Endothelial cell of umbilical vein (primary cell): ENCODE measurements at regions of chr21 and their contacts with region 1.

Region 1: DNA sequence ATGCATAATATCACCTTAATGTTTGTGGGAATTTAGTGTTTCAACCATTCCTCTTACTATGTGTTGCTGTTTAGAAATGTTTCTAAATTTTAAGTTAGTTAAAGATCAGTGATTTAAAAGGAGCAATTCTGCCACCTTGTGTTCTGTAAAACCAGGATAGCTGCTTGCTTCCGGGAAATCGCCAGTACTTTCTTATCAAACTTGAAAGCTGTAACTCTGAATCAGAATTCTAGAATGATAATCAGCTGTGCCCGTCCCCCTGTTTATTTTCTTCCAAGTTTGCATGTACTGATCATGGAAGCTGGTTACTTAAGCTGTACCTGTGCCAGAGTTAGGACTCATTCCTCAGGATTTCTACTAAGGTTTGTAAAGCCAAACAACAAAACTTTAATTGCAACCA is 656.4 kb downstream of the LTN1 start:
- DNase-seq: peak; percentile 78
- H3K4me3 ChIP-seq: no peak overlapping the region
- H3K27ac ChIP-seq: no peak overlapping the region
- H3K4me1 ChIP-seq: peaks cover 20% of the 10 kb centered on the region
- H3K27me3 ChIP-seq: no peaks in the 10 kb centered on the region
- CTCF ChIP-seq: peak; percentile 16 to 25
- POLR2A ChIP-seq: no peak

Region 2: DNA sequence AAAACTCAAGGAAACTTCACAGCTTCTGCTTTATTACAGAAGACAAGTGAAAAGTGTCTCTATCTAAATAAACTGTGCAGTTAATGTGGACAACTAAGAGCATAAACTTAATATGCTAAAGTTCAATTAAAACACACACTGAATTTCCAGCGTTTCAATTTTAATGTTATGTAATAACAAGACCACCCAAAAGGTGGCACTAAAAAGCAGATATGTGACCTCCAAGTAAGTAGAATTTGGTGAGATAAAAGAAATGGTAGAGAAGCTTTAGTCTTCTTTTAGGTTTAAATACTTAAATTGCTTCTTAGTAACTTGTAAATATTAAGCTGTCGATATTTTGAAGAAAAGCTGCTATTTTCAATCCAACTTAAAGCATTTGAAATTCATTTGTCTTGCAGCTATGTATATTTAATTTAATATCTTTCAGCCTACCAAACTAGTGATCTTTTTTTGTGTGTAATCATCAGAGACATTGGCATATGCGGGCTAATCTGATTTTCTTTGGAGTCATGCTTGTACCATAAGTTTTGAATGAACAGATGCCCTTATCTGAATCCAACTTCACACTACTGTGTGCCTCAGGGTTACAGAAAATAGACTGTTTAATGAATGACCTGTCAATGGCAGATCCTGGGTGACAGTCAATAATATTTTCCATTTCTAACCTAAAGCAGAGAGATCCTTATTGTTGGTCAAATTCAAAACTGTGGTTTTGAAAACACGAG is 1454.6 kb before region 1 on chr21:
- CTCF ChIA-PET with region 1: interaction called, 12 read pairs
- POLR2A ChIA-PET with region 1: no interaction called
- dilution Hi-C with region 1: no loop called
- intact Hi-C with region 1: no loop called
- DNase-seq: peak; percentile 39
- H3K4me3 ChIP-seq: no peak overlapping the region
- H3K27ac ChIP-seq: no peak overlapping the region
- H3K4me1 ChIP-seq: no peaks in the 10 kb centered on the region
- H3K27me3 ChIP-seq: no peaks in the 10 kb centered on the region
- CTCF ChIP-seq: peak in 1 of 2 donors; percentile 2
- POLR2A ChIP-seq: no peak

Region 3: DNA sequence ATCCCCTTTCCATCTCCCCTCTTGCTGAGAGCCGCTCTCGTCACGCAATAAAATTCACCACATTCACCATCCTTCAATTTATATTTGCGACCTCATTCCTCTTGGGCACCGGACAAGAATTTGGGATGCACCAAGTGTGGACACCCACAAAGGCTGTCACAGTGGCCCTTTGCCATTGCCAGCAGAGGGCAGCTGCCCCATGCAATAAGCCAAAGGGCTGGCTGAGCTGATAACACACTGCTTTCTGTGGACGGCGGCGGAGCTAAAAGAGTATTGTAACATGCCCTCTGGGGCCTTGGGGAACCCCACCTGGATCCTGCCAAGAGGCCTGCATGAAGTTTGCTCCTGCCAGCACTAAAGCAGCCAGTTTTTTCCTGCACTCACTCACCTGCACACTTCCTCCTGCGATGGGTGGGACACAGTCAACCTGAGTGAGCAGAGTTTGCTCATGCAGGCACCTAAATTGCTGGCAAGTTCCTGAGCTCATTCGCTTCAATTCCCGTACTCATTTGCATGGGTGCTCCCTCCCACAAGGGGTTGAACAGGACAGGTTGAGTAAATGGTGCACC is 577.1 kb before region 1 on chr21:
- CTCF ChIA-PET with region 1: interaction called, 15 read pairs
- POLR2A ChIA-PET with region 1: no interaction called
- dilution Hi-C with region 1: no loop called
- intact Hi-C with region 1: loop called (anchors 1 kb)
- DNase-seq: no peak
- H3K4me3 ChIP-seq: no peak overlapping the region
- H3K27ac ChIP-seq: no peak overlapping the region
- H3K4me1 ChIP-seq: no peaks in the 10 kb centered on the region
- H3K27me3 ChIP-seq: no peaks in the 10 kb centered on the region
- CTCF ChIP-seq: peak in 1 of 2 donors; percentile 46
- POLR2A ChIP-seq: no peak

Region 4: GRCh38 chr21:28196981-28197380 is 139.3 kb before region 1 on chr21:
- CTCF ChIA-PET with region 1: interaction called, 5 read pairs
- POLR2A ChIA-PET with region 1: no interaction called
- dilution Hi-C with region 1: no loop called
- intact Hi-C with region 1: loop called (anchors 5 kb)
- DNase-seq: no peak
- H3K4me3 ChIP-seq: no peak overlapping the region
- H3K27ac ChIP-seq: no peak overlapping the region
- H3K4me1 ChIP-seq: no peaks in the 10 kb centered on the region
- H3K27me3 ChIP-seq: no peaks in the 10 kb centered on the region
- CTCF ChIP-seq: no peak
- POLR2A ChIP-seq: no peak

Region 5: GRCh38 chr21:28522014-28522799 is 185.9 kb after region 1 on chr21:
- CTCF ChIA-PET with region 1: interaction called, 6 read pairs
- POLR2A ChIA-PET with region 1: no interaction called
- dilution Hi-C with region 1: no loop called
- intact Hi-C with region 1: loop called (anchors 1 kb)
- DNase-seq: peak; percentile 88
- H3K4me3 ChIP-seq: no peak overlapping the region
- H3K27ac ChIP-seq: peak overlapping the region; percentile 72
- H3K4me1 ChIP-seq: peaks cover 45% of the 10 kb centered on the region
- H3K27me3 ChIP-seq: no peaks in the 10 kb centered on the region
- CTCF ChIP-seq: peak; percentile 44 to 56
- POLR2A ChIP-seq: no peak

Region 6: GRCh38 chr21:28725396-28725795 is 389.1 kb after region 1 on chr21:
- CTCF ChIA-PET with region 1: no interaction called
- POLR2A ChIA-PET with region 1: no interaction called
- dilution Hi-C with region 1: no loop called
- intact Hi-C with region 1: no loop called
- DNase-seq: no peak
- H3K4me3 ChIP-seq: no peak overlapping the region
- H3K27ac ChIP-seq: no peak overlapping the region
- H3K4me1 ChIP-seq: no peaks in the 10 kb centered on the region
- H3K27me3 ChIP-seq: no peaks in the 10 kb centered on the region
- CTCF ChIP-seq: no peak
- POLR2A ChIP-seq: no peak